ENCODE measurements at regions of chr20 and their contacts with region 1.

Region 1: DNA sequence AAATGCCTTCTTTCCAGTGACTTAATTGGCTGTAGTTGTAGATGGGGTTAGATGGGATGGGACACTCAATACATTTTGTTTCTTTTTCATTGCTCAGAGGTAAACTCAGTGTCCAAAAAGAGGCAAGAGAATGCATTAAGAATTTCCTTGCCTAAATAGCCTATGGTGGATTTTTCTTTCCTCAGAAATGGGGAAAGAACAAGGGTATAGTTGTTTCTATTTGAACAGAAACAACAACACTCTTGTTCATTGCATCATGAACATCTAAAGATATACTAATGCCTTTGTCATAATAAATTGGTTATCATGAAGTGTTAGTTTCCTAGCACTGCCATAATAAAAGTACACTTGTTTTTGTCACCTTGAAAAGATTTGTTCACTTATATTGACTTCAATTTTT is 14.6 kb upstream of the DEFB123 start:
- DNase-seq: no peak
- ATAC-seq: no peak
- H3K4me3 Mint-ChIP-seq: no peak overlapping the region
- H3K27ac Mint-ChIP-seq: no peak overlapping the region
- H3K4me1 Mint-ChIP-seq: no peaks in the 10 kb centered on the region
- H3K27me3 Mint-ChIP-seq: peaks cover 2% of the 10 kb centered on the region
- CTCF ChIP-seq: no peak

Region 2: DNA sequence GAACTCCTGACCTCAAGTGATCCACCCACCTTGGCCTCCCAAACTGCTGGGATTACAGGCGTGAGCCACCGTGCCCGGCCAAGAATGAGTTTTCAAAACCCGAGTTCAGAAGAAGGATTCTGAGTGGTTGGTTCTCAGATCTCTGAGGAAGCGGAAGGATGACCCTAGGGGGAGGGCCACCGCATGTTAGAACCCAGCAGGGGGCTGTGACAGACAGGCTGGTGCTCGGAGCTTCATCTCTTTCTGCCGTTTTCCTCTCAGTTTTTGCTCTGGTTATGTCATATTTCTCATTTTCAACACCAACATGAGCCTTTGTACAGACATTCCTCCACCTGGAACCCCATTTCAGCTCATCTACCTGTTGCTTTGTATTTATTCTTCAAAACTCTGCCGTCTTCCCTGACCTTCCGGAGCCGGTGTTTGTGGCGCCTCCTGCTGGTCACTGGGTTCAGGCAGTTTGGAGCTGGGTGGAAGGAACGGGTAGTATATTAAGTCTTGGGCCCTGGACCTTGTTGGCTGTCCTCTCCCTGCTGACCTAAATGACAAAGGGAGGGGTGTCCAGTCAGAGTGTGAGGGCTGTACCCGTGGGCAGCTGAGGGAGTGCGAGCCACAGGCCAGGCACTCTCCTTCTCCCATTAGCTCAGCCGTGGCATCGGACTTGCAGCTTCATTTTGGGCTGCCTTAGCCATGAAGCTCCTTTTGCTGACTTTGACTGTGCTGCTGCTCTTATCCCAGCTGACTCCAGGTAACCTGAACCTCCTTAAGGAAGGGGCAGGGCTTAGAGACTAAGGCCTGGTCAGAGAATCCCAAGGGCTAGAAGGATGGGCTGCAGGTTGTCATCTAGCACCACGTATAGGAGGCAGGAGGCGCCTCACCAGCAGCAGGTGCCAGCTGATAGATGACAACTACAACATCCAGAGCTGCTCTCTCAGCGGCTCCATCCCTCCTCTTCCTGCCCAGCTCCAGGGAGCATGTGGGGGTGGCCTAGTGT is 14.5 kb after region 1 on chr20 and contains the start of gene DEFB123:
- CTCF ChIA-PET with region 1: interaction called, 11 read pairs
- POLR2A ChIA-PET with region 1: no interaction called
- intact Hi-C with region 1: no loop called
- DNase-seq: peak; percentile 15
- ATAC-seq: no peak
- H3K4me3 Mint-ChIP-seq: no peak within 1 kb of the TSS
- H3K27ac Mint-ChIP-seq: no peak within 1 kb of the TSS
- H3K4me1 Mint-ChIP-seq: no peaks in the 10 kb centered on the region
- H3K27me3 Mint-ChIP-seq: no peaks in the 10 kb centered on the region
- CTCF ChIP-seq: peak; percentile 51
- total RNA-seq, gene DEFB123: not detected

Region 3: GRCh38 chr20:31494131-31494530 is 68.3 kb after region 1 on chr20:
- CTCF ChIA-PET with region 1: no interaction called
- POLR2A ChIA-PET with region 1: no interaction called
- intact Hi-C with region 1: no loop called
- DNase-seq: no peak
- ATAC-seq: no peak
- H3K4me3 Mint-ChIP-seq: no peak overlapping the region
- H3K27ac Mint-ChIP-seq: no peak overlapping the region
- H3K4me1 Mint-ChIP-seq: no peaks in the 10 kb centered on the region
- H3K27me3 Mint-ChIP-seq: peaks cover 14% of the 10 kb centered on the region
- CTCF ChIP-seq: no peak

Measured in activated CD8-positive, alpha-beta T cell treated with anti-CD3 and anti-CD28 coated beads for 36 hours (primary cell).